ENCODE measurements at regions of chr1 and their contacts with region 1.

Region 1: DNA sequence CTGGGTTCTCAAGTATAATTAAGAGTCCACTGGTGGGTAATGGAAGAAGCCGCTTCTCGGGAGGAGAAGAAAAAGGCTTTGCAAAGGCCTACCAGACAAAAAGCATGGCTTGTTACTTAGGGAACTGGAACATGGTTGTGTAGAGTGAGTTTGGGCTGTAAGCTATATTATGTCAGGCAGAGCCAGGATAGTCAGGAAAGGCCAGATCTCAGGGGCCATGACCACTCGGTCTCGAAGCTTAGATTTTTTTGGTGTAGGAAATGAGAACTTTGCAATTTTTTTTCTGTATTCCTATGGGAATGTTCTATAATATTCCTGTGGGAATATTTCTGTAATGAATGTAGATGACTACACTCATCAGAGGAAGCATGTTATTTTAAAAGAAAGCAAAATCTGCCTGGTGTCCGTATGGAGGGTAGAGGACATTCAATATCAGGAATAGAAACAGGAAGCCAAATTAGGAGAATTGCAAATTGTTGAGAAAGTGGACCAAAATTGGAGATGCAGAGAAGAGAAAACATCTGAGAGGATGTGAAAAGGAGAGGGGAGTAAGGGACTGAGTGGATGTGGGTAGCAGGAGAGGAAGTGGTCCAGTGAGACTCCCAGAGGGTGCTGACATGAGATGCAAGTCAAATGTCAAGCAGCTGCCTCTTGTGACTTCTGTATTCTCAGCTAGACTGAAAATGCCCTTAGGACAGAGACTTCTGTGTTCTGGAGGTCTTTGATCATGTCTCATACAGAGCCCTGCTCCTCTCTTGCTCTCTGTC is 45.2 kb upstream of the HAO2 start:
- DNase-seq: no peak
- H3K4me3 ChIP-seq: no peak overlapping the region
- H3K4me1 ChIP-seq: no peaks in the 10 kb centered on the region
- H3K27me3 ChIP-seq: no peaks in the 10 kb centered on the region

Region 2: DNA sequence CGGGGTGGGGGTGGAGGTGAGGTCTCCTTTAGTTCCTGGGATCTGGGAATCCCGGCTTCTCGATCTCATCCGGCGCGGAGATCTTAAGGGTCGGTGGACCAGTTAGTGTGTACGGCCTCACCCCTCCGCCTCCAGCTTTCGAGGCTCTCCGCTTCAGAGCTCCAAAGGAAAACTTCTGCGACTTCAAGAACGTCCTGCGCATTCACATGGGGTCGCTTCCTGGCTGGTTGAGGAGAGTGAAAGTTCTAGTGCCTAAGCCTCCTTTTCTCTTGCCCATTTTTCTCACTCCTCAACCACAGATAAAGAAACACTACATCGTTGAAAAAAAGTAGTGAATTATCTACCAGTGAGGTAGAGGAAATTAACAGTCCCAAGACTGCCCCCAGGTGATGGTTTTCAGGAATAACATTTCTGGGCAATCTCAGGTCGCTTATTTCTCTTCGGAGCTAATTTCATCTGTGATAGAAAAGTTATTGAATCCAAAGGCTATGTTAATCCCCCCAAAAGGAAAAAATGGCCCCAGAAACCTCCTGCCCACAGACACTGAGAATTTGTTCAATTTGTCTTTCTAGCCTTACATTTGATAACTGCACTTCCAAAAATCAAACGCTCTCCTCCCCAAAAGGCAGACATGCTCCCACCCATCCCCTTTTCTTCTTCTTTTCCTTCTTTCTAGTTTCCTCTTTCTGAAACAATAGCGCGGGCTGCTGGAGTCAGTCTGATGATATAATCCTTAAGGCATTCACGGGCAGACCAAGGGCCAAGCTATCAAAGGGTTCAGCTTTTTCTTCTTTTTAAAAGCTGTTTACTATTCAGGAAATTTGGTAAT is 314.7 kb before region 1 on chr1:
- in situ Hi-C with region 1: no loop called
- DNase-seq: peak; percentile 24 to 59
- H3K4me3 ChIP-seq: no peak overlapping the region
- H3K4me1 ChIP-seq: no peaks in the 10 kb centered on the region
- H3K27me3 ChIP-seq: 0 out of 2 replicates have a peak, but pooled peaks cover 2% of the 10 kb centered on the region

Region 3: GRCh38 chr1:119372490-119373086 is 49.2 kb after region 1 on chr1:
- in situ Hi-C with region 1: loop called (anchors 10 kb)
- DNase-seq: peak; percentile 72 to 75
- H3K4me3 ChIP-seq: no peak overlapping the region
- H3K4me1 ChIP-seq: peaks cover 19% of the 10 kb centered on the region
- H3K27me3 ChIP-seq: peaks cover 11% of the 10 kb centered on the region

Region 4: GRCh38 chr1:119449964-119450363 is 126.6 kb after region 1 on chr1:
- in situ Hi-C with region 1: loop called (anchors 25 kb)
- DNase-seq: peak in 1 of 2 experiments; percentile 53
- H3K4me3 ChIP-seq: no peak overlapping the region
- H3K4me1 ChIP-seq: no peaks in the 10 kb centered on the region
- H3K27me3 ChIP-seq: no peaks in the 10 kb centered on the region

Region 5: DNA sequence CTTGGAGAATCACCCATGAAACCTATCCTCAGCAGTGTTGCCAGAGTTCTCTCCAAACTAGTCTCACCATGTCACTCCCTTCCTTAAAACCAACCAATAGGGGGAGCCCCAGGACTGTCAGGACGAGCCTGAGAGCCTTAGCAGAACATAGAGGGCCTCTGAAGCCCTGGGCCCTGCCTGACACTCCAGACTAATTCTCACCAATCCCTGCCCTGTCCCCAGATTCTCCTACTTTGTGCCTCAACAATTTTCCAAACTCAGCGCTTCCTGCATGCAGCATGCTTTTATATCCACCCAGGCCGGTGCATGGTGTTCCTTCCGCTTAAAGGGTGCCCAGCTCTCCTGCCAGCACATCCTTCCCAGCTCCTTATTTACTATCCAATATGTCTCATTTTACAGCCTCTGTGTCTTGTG is 226.3 kb after region 1 on chr1:
- in situ Hi-C with region 1: loop called (anchors 25 kb)
- DNase-seq: peak; percentile 40 to 76
- H3K4me3 ChIP-seq: no peak overlapping the region
- H3K4me1 ChIP-seq: no peaks in the 10 kb centered on the region
- H3K27me3 ChIP-seq: no peaks in the 10 kb centered on the region

Region 6: GRCh38 chr1:119675349-119676345 is 352.2 kb after region 1 on chr1:
- in situ Hi-C with region 1: loop called (anchors 25 kb)
- DNase-seq: peak; percentile 76 to 91
- H3K4me3 ChIP-seq: peak overlapping the region; percentile 23
- H3K4me1 ChIP-seq: peaks cover 41% of the 10 kb centered on the region
- H3K27me3 ChIP-seq: no peaks in the 10 kb centered on the region